CD8-positive, alpha-beta T cell (primary cell): ENCODE measurements at regions of chr9 and their contacts with region 1.

Region 1: DNA sequence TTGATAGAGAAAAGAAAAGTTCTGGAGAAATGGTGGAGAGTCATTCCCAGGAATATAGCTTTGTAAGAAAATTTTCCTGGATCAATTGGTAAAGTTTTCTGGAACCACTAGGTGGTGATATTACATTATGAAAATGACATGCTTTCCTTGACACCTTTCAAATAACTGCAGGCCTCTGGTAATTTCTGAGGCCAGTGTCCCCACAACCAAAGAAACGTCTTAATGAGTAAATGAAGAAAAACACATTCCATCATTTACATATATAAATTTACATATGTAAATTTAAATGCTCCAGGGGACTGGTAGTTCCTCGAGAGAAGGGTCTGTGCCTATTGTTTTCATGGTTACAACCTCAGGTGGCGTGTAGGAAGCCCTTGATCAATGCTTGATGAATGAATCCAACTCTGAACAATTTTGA is 17.2 kb upstream of the RGS3 start:
- DNase-seq: peak in 2 of 9 experiments; percentile 56 to 66
- ATAC-seq: peak; percentile 34
- H3K4me3 ChIP-seq: no peak overlapping the region
- H3K4me3 Mint-ChIP-seq: no peak overlapping the region
- H3K27ac ChIP-seq: no peak overlapping the region
- H3K27ac Mint-ChIP-seq: no peak overlapping the region
- H3K4me1 ChIP-seq: no peaks in the 10 kb centered on the region
- H3K4me1 Mint-ChIP-seq: peaks cover 2% of the 10 kb centered on the region
- H3K27me3 ChIP-seq: no peaks in the 10 kb centered on the region
- H3K27me3 Mint-ChIP-seq: no peaks in the 10 kb centered on the region
- CTCF ChIP-seq: peak; percentile 92

Region 2: GRCh38 chr9:113401027-113401792 is 45.1 kb before region 1 on chr9 and contains the start of gene ALAD:
- CTCF ChIA-PET with region 1: interaction called, 16 read pairs
- POLR2A ChIA-PET with region 1: no interaction called
- intact Hi-C with region 1: loop called (anchors 2 kb)
- DNase-seq: peak; percentile 98 to 100 (median 100)
- ATAC-seq: peak; percentile 99
- H3K4me3 ChIP-seq: peak within 1 kb of the TSS; percentile 80 to 81
- H3K4me3 Mint-ChIP-seq: peak within 1 kb of the TSS; percentile 97
- H3K27ac ChIP-seq: peak within 1 kb of the TSS; percentile 53
- H3K27ac Mint-ChIP-seq: peak within 1 kb of the TSS; percentile 92
- H3K4me1 ChIP-seq: peaks cover 16% of the 10 kb centered on the region
- H3K4me1 Mint-ChIP-seq: peaks cover 28% of the 10 kb centered on the region
- H3K27me3 ChIP-seq: no peaks in the 10 kb centered on the region
- H3K27me3 Mint-ChIP-seq: no peaks in the 10 kb centered on the region
- CTCF ChIP-seq: peak; percentile 94
- total RNA-seq, gene ALAD: 11.2 to 11.5 TPM

Region 3: GRCh38 chr9:113511856-113512761 is 65.8 kb after region 1 on chr9:
- CTCF ChIA-PET with region 1: interaction called, 11 read pairs
- POLR2A ChIA-PET with region 1: no interaction called
- intact Hi-C with region 1: no loop called
- DNase-seq: peak; percentile 41 to 89 (median 77)
- ATAC-seq: peak; percentile 68
- H3K4me3 ChIP-seq: peak overlapping the region; percentile 16 to 26
- H3K4me3 Mint-ChIP-seq: peak overlapping the region; percentile 74
- H3K27ac ChIP-seq: peak overlapping the region; percentile 60 to 65
- H3K27ac Mint-ChIP-seq: peak overlapping the region; percentile 90
- H3K4me1 ChIP-seq: peaks cover 59% of the 10 kb centered on the region
- H3K4me1 Mint-ChIP-seq: peaks cover 68% of the 10 kb centered on the region
- H3K27me3 ChIP-seq: no peaks in the 10 kb centered on the region
- H3K27me3 Mint-ChIP-seq: no peaks in the 10 kb centered on the region
- CTCF ChIP-seq: no peak

Region 4: GRCh38 chr9:113523421-113524236 is 77.3 kb after region 1 on chr9:
- CTCF ChIA-PET with region 1: interaction called, 10 read pairs
- POLR2A ChIA-PET with region 1: no interaction called
- intact Hi-C with region 1: loop called (anchors 2 to 5 kb)
- DNase-seq: peak in 8 of 9 experiments; percentile 46 to 87 (median 66)
- ATAC-seq: peak; percentile 27
- H3K4me3 ChIP-seq: peak overlapping the region; percentile 31 to 40
- H3K4me3 Mint-ChIP-seq: peak overlapping the region; percentile 80
- H3K27ac ChIP-seq: peak overlapping the region; percentile 19 to 78
- H3K27ac Mint-ChIP-seq: peak overlapping the region; percentile 94
- H3K4me1 ChIP-seq: peaks cover 97% of the 10 kb centered on the region
- H3K4me1 Mint-ChIP-seq: peaks cover 92% of the 10 kb centered on the region
- H3K27me3 ChIP-seq: no peaks in the 10 kb centered on the region
- H3K27me3 Mint-ChIP-seq: no peaks in the 10 kb centered on the region
- CTCF ChIP-seq: no peak

Region 5: DNA sequence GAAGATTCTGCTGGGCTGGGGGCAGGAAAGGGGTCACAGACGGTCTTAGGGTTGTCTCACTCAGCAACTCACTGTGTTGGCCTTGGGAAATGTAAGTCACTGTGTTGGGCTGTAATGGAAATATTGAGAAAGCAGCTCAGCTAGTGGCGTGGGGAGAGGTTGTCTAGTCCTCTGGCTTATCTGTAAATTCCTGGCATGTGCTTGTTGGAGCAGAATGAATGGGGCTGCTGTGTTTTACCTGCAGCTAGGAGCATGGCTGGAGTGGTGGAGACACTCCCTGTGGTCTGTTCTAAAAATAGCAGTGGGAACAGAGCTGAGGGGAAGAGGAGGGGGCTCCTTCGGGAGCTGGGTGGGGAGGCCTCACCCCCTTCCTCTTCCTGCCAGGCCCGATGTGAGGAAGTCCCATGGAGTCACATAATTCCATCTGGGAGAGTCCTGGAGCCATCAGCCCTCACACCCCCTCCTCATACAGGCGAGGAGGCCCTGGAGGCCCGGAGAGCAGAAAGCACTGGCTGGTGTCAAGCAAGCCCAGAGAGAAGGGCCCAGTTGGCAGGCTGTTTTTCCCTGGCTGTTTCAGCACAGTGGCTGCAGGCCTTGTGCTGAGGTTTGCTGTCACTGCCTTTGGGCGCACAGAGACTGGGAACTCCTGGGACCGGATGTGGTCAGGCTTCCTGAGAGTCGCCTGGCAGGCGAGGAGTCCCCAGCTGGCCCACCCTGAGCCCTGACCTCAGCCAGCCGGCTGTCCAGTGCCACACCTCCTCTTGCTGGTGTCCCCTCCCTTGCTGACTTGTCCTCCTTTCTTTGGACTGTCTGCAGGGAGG is 102.1 kb after region 1 on chr9:
- CTCF ChIA-PET with region 1: interaction called, 10 read pairs
- POLR2A ChIA-PET with region 1: no interaction called
- intact Hi-C with region 1: no loop called
- DNase-seq: peak in 2 of 9 experiments; percentile 29 to 43
- ATAC-seq: peak; percentile 23
- H3K4me3 ChIP-seq: no peak overlapping the region
- H3K4me3 Mint-ChIP-seq: peak overlapping the region; percentile 20
- H3K27ac ChIP-seq: peak overlapping the region; percentile 12 to 67
- H3K27ac Mint-ChIP-seq: peak overlapping the region; percentile 89
- H3K4me1 ChIP-seq: peaks cover 27% of the 10 kb centered on the region
- H3K4me1 Mint-ChIP-seq: peaks cover 55% of the 10 kb centered on the region
- H3K27me3 ChIP-seq: no peaks in the 10 kb centered on the region
- H3K27me3 Mint-ChIP-seq: no peaks in the 10 kb centered on the region
- CTCF ChIP-seq: no peak

Region 6: GRCh38 chr9:113591001-113591898 is 144.9 kb after region 1 on chr9:
- CTCF ChIA-PET with region 1: interaction called, 267 read pairs
- POLR2A ChIA-PET with region 1: no interaction called
- intact Hi-C with region 1: loop called in 1 of 2 experiments (anchors 2 kb)
- DNase-seq: peak in 4 of 9 experiments; percentile 48 to 60 (median 53)
- ATAC-seq: no peak
- H3K4me3 ChIP-seq: no peak overlapping the region
- H3K4me3 Mint-ChIP-seq: no peak overlapping the region
- H3K27ac ChIP-seq: no peak overlapping the region
- H3K27ac Mint-ChIP-seq: no peak overlapping the region
- H3K4me1 ChIP-seq: peaks cover 6% of the 10 kb centered on the region
- H3K4me1 Mint-ChIP-seq: peaks cover 27% of the 10 kb centered on the region
- H3K27me3 ChIP-seq: no peaks in the 10 kb centered on the region
- H3K27me3 Mint-ChIP-seq: no peaks in the 10 kb centered on the region
- CTCF ChIP-seq: peak; percentile 50

Region 7: GRCh38 chr9:113772121-113772810 is 325.9 kb after region 1 on chr9:
- CTCF ChIA-PET with region 1: no interaction called
- POLR2A ChIA-PET with region 1: no interaction called
- intact Hi-C with region 1: no loop called
- DNase-seq: no peak
- ATAC-seq: no peak
- H3K4me3 ChIP-seq: no peak overlapping the region
- H3K4me3 Mint-ChIP-seq: no peak overlapping the region
- H3K27ac ChIP-seq: no peak overlapping the region
- H3K27ac Mint-ChIP-seq: no peak overlapping the region
- H3K4me1 ChIP-seq: no peaks in the 10 kb centered on the region
- H3K4me1 Mint-ChIP-seq: no peaks in the 10 kb centered on the region
- H3K27me3 ChIP-seq: no peaks in the 10 kb centered on the region
- H3K27me3 Mint-ChIP-seq: peaks cover 20% of the 10 kb centered on the region
- CTCF ChIP-seq: no peak